GM12878 (cell line): ENCODE measurements at regions of chr20 and their contacts with region 1.

Region 1: GRCh38 chr20:44001667-44002596 is 87.3 kb downstream of the TOX2 start:
- DNase-seq: peak; percentile 74
- ATAC-seq: peak; percentile 90
- H3K4me3 ChIP-seq: no peak overlapping the region
- H3K27ac ChIP-seq: no peak overlapping the region
- H3K4me1 ChIP-seq: peaks cover 16% of the 10 kb centered on the region
- H3K27me3 ChIP-seq: no peaks in the 10 kb centered on the region
- CTCF ChIP-seq: no peak
- EP300 ChIP-seq: peak in 1 of 2 experiments; percentile 6; a peak in 2 of 4 replicates
- POLR2A ChIP-seq: no peak
- RAD21 ChIP-seq: no peak

Region 2: GRCh38 chr20:43812151-43812550 is 189.8 kb before region 1 on chr20:
- CTCF ChIA-PET with region 1: no interaction called
- POLR2A ChIA-PET with region 1: no interaction called
- RAD21 ChIA-PET with region 1: no interaction called
- SMC1A ChIA-PET with region 1: no interaction called
- in situ Hi-C with region 1: no loop called
- intact Hi-C with region 1: no loop called
- DNase-seq: no peak
- ATAC-seq: no peak
- H3K4me3 ChIP-seq: no peak overlapping the region
- H3K27ac ChIP-seq: no peak overlapping the region
- H3K4me1 ChIP-seq: no peaks in the 10 kb centered on the region
- H3K27me3 ChIP-seq: no peaks in the 10 kb centered on the region
- CTCF ChIP-seq: no peak
- EP300 ChIP-seq: no peak
- POLR2A ChIP-seq: no peak
- RAD21 ChIP-seq: no peak

Region 3: GRCh38 chr20:43919686-43920403 is 82.1 kb before region 1 on chr20:
- CTCF ChIA-PET with region 1: interaction called, 3 read pairs
- POLR2A ChIA-PET with region 1: interaction called, 5 read pairs
- RAD21 ChIA-PET with region 1: interaction called, 5 read pairs
- SMC1A ChIA-PET with region 1: interaction called, 5 read pairs
- in situ Hi-C with region 1: no loop called
- intact Hi-C with region 1: loop called (anchors 5 kb)
- DNase-seq: no peak
- ATAC-seq: no peak
- H3K4me3 ChIP-seq: no peak overlapping the region
- H3K27ac ChIP-seq: no peak overlapping the region
- H3K4me1 ChIP-seq: peaks cover 43% of the 10 kb centered on the region
- H3K27me3 ChIP-seq: peaks cover 0 to 4% of the 10 kb centered on the region in 2 experiments; a peak in 2 of 4 replicates
- CTCF ChIP-seq: no peak
- EP300 ChIP-seq: no peak
- POLR2A ChIP-seq: no peak
- RAD21 ChIP-seq: no peak

Region 4: DNA sequence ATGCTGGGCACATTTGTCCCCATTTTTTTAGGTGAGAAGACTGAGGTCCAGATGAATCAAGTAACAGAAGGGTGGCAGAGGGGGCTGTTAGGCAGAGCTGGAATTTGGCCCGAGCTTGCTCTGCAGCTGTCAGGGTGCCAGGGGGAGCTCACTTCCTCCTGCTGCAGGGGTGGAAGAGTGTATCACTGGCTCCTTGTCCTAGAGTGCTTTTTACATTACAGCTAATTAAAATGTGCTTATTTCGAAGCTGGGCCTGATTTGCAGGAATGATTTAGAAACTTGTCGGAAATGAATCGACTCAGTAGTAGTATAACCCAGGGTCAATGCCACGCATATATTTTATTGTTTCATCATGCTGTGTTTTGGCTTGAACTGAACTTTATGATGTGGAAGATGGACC is 76.1 kb before region 1 on chr20:
- CTCF ChIA-PET with region 1: interaction called, 3 read pairs
- POLR2A ChIA-PET with region 1: interaction called, 4 read pairs
- RAD21 ChIA-PET with region 1: interaction called, 4 read pairs
- SMC1A ChIA-PET with region 1: interaction called, 17 read pairs
- in situ Hi-C with region 1: no loop called
- intact Hi-C with region 1: loop called (anchors 5 kb)
- DNase-seq: no peak
- ATAC-seq: peak; percentile 54
- H3K4me3 ChIP-seq: no peak overlapping the region
- H3K27ac ChIP-seq: no peak overlapping the region
- H3K4me1 ChIP-seq: peaks cover 36% of the 10 kb centered on the region
- H3K27me3 ChIP-seq: no peaks in the 10 kb centered on the region
- CTCF ChIP-seq: peak in 2 of 3 experiments; percentile 8 to 36; a peak in 2 of 6 replicates
- EP300 ChIP-seq: no peak
- POLR2A ChIP-seq: no peak
- RAD21 ChIP-seq: peak; percentile 24; the same call in 1 of the 2 replicates

Region 5: DNA sequence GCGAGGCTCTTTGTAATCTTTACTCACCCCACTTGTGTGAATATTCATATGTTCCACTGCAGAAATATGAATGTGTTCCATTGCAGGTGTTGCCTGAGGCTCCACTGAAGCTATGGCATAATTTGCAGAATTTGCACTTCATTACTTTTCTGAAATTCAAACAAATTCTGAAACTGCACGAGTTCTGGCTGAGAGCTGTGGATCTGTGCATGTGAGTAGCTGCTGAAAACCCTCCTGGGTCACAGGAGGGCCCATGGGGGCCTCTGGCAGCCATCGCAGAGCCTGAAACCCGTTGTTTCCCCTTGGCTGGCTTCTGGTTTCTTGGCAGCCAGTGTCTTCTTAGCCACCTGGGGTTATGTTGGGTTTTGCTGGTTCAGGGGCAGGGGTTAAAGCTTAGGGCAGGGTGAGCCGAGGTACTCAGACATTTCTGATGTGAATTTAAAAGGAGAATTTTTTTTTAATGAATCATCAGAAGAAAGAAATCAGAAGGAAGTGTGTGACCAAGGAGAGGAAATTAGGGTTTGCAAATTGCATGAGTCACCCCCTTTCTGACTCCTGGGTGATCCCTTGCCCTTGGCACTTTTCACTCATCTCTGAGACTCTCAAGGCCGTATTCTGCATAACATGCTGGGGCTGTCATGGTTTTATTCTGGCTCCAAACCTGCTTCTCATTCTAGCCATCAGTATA is 46.7 kb before region 1 on chr20:
- CTCF ChIA-PET with region 1: no interaction called
- POLR2A ChIA-PET with region 1: interaction called, 3 read pairs
- RAD21 ChIA-PET with region 1: interaction called, 5 read pairs
- SMC1A ChIA-PET with region 1: interaction called, 14 read pairs
- in situ Hi-C with region 1: no loop called
- intact Hi-C with region 1: no loop called
- DNase-seq: peak; percentile 73
- ATAC-seq: peak; percentile 85
- H3K4me3 ChIP-seq: 0 out of 2 replicates have a peak overlapping the region, but pooled peaks have one; percentile 11
- H3K27ac ChIP-seq: peak overlapping the region; percentile 9
- H3K4me1 ChIP-seq: peaks cover 40% of the 10 kb centered on the region
- H3K27me3 ChIP-seq: no peaks in the 10 kb centered on the region
- CTCF ChIP-seq: no peak
- EP300 ChIP-seq: 0 out of 4 replicates have a peak, but pooled peaks of 1 of the 2 experiments have one; percentile 5
- POLR2A ChIP-seq: no peak
- RAD21 ChIP-seq: no peak

Region 6: DNA sequence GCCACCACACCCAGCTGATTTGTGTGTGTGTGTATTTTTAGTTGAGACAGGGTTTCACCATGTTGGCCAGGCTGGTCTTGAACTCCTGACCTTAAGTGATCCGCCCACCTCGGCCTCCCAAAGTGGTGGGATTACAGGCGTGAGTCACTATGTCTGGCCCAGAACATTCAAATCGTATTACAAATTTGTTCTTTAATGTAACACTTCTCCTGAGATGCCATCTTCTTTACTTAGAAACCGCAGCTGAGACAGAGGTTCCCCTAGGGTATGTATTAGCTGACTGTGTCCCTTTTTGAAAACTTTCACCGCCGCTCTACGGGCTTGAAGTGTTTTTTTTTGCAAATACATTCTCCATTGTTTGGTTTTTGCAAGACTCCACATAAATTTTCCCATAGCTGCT is 24.7 kb before region 1 on chr20:
- CTCF ChIA-PET with region 1: interaction called, 5 read pairs
- POLR2A ChIA-PET with region 1: no interaction called
- RAD21 ChIA-PET with region 1: interaction called, 7 read pairs
- SMC1A ChIA-PET with region 1: interaction called, 32 read pairs
- in situ Hi-C with region 1: no loop called
- intact Hi-C with region 1: no loop called
- DNase-seq: no peak
- ATAC-seq: no peak
- H3K4me3 ChIP-seq: no peak overlapping the region
- H3K27ac ChIP-seq: no peak overlapping the region
- H3K4me1 ChIP-seq: no peaks in the 10 kb centered on the region
- H3K27me3 ChIP-seq: no peaks in the 10 kb centered on the region
- CTCF ChIP-seq: no peak
- EP300 ChIP-seq: no peak
- POLR2A ChIP-seq: no peak
- RAD21 ChIP-seq: no peak

Region 7: GRCh38 chr20:43983359-43983758 is 18.6 kb before region 1 on chr20:
- CTCF ChIA-PET with region 1: interaction called, 5 read pairs
- POLR2A ChIA-PET with region 1: interaction called, 3 read pairs
- RAD21 ChIA-PET with region 1: interaction called, 7 read pairs
- SMC1A ChIA-PET with region 1: interaction called, 32 read pairs
- in situ Hi-C with region 1: no loop called
- intact Hi-C with region 1: no loop called
- DNase-seq: no peak
- ATAC-seq: no peak
- H3K4me3 ChIP-seq: no peak overlapping the region
- H3K27ac ChIP-seq: no peak overlapping the region
- H3K4me1 ChIP-seq: peaks cover 3% of the 10 kb centered on the region
- H3K27me3 ChIP-seq: no peaks in the 10 kb centered on the region
- CTCF ChIP-seq: peak; percentile 8 to 40 (median 32); a peak in 3 of 6 replicates
- EP300 ChIP-seq: no peak
- POLR2A ChIP-seq: no peak
- RAD21 ChIP-seq: no peak